ENCODE measurements at regions of chr13 and their contacts with region 1.

Region 1: DNA sequence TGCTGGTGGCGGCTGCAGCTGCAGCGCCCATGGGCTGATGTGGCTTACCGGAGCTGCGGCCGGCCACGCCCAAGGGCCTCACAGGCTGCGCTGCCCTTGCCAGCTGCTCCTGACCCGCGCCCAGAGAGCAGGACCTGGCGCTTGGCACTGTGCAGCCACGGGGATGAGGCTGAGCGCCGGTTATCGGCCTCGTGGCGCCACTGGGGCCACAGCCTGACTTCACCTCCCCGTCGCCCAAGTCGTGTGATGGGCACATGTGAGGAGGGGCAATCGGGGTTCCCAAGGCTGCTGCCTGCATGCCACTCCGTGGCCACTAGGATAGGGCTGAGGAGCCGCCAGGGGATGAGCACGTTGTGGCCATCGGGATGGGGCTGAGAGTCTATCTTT is 77.2 kb upstream of the PABPC3 start:
- DNase-seq: peak; percentile 53
- ATAC-seq: no peak
- H3K4me3 Mint-ChIP-seq: peak overlapping the region; percentile 66
- H3K27ac Mint-ChIP-seq: no peak overlapping the region
- H3K4me1 Mint-ChIP-seq: peaks cover 12% of the 10 kb centered on the region
- H3K27me3 Mint-ChIP-seq: peaks cover 45% of the 10 kb centered on the region
- CTCF ChIP-seq: no peak

Region 2: DNA sequence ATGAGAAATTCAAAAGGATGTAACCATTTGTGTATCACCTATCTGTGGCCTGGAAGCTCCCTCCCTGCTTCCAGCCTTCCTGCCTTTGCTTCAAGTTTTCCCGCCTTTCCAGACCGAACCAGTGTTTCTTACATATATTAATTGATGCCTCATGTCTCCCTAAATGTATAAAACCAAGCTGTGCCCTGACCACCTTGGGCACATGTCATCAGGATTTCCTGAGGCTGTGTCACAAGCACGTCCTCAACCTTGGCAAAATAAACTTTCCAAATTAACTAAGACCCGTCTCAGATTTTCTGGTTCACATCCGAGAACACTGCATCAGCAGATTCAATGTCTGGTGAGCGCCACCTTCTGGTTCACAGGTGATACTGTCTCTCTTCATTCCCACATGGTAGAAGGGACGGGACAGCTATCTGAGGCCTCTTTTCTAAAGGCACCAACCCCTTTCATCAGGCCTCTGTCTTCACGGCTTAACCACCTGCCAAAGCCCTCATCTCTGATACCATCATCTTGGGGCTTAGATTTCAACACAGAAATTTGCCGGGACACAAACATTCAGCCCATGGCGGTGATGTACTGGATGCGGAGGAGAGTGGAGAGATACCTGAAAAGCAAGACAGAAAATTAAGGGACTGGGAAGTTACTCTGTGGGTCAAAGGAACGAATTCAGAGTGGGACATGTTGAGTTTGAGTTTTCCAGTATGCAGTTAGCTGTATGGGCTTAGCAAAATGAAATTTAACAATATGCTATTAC is 18.5 kb after region 1 on chr13:
- CTCF ChIA-PET with region 1: interaction called, 11 read pairs
- POLR2A ChIA-PET with region 1: no interaction called
- DNase-seq: peak; percentile 55
- ATAC-seq: peak; percentile 91
- H3K4me3 Mint-ChIP-seq: no peak overlapping the region
- H3K27ac Mint-ChIP-seq: no peak overlapping the region
- H3K4me1 Mint-ChIP-seq: peaks cover 2% of the 10 kb centered on the region
- H3K27me3 Mint-ChIP-seq: no peaks in the 10 kb centered on the region
- CTCF ChIP-seq: peak; percentile 69